ENCODE measurements at regions of chr12 and their contacts with region 1.

Region 1: DNA sequence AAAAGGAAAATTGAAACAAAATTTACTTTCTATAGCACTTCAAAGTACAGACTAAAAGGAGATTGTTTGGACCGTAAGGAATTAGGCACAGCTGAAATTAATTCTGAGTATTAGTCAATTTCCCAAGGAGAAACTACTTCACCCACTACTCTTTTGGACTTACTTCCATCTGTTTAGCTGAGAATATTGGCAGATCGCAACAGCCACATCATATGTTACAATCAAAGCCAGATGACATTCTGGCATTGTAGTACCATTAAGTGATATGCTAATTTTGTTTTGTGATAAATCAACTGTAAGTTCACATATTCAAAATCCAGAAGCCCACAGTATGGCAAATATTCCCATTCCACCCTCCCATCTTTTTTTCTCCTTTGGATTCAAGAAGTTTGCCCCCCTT is 47.1 kb upstream of the ANKS1B start:
- DNase-seq: no peak
- ATAC-seq: no peak
- H3K4me3 ChIP-seq: no peak overlapping the region
- H3K27ac ChIP-seq: no peak overlapping the region
- H3K4me1 ChIP-seq: no peaks in the 10 kb centered on the region
- H3K27me3 ChIP-seq: no peaks in the 10 kb centered on the region
- CTCF ChIP-seq: no peak
- POLR2A ChIP-seq: no peak
- RAD21 ChIP-seq: no peak

Region 2: GRCh38 chr12:99810718-99811593 is 220.9 kb before region 1 on chr12:
- CTCF ChIA-PET with region 1: no interaction called
- POLR2A ChIA-PET with region 1: no interaction called
- RAD21 ChIA-PET with region 1: no interaction called
- intact Hi-C with region 1: no loop called
- DNase-seq: peak; percentile 15
- ATAC-seq: peak; percentile 42; the same call in 1 of the 2 replicates
- H3K4me3 ChIP-seq: no peak overlapping the region
- H3K27ac ChIP-seq: no peak overlapping the region
- H3K4me1 ChIP-seq: no peaks in the 10 kb centered on the region
- H3K27me3 ChIP-seq: peaks cover 48% of the 10 kb centered on the region
- CTCF ChIP-seq: peak in 2 of 3 experiments; percentile 26 to 29; a peak in 2 of 6 replicates
- POLR2A ChIP-seq: no peak
- RAD21 ChIP-seq: peak; percentile 42

Region 3: DNA sequence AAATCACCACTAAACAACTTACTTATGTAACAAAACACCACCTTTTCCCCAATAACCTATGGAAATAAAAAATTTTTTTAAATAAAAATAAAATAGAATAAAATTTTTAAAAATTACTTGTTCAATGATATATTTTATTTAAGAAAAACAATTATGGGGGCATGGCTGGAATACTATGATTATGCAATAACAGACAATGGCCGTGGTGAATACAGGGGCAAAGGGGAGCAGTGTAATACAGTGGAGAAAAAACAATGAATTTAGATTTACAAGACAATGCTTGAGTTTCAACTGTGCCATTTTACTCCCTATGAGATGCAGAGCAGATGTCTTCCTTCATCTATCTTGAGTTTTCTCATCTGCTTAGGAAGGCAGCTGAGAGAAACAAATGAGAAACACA is 38.0 kb after region 1 on chr12:
- CTCF ChIA-PET with region 1: no interaction called
- POLR2A ChIA-PET with region 1: no interaction called
- RAD21 ChIA-PET with region 1: no interaction called
- intact Hi-C with region 1: loop called (anchors 1 kb)
- DNase-seq: no peak
- ATAC-seq: no peak
- H3K4me3 ChIP-seq: no peak overlapping the region
- H3K27ac ChIP-seq: no peak overlapping the region
- H3K4me1 ChIP-seq: no peaks in the 10 kb centered on the region
- H3K27me3 ChIP-seq: no peaks in the 10 kb centered on the region
- CTCF ChIP-seq: no peak
- POLR2A ChIP-seq: no peak
- RAD21 ChIP-seq: no peak

Measured in HCT116 (cell line).